GM23248 (cell line): ENCODE measurements at regions of chr14 and their contacts with region 1.

Region 1: GRCh38 chr14:90697577-90698206 is 118.5 kb downstream of the TTC7B start:
- DNase-seq: peak; percentile 88
- H3K4me3 ChIP-seq: no peak overlapping the region
- H3K27ac ChIP-seq: no peak overlapping the region
- H3K4me1 ChIP-seq: 0 out of 2 replicates have a peak, but pooled peaks cover 10% of the 10 kb centered on the region
- H3K27me3 ChIP-seq: no peaks in the 10 kb centered on the region

Region 2: GRCh38 chr14:90288651-90289355 is 408.9 kb before region 1 on chr14:
- in situ Hi-C with region 1: no loop called
- DNase-seq: no peak
- H3K4me3 ChIP-seq: no peak overlapping the region
- H3K27ac ChIP-seq: no peak overlapping the region
- H3K4me1 ChIP-seq: no peaks in the 10 kb centered on the region
- H3K27me3 ChIP-seq: no peaks in the 10 kb centered on the region

Region 3: DNA sequence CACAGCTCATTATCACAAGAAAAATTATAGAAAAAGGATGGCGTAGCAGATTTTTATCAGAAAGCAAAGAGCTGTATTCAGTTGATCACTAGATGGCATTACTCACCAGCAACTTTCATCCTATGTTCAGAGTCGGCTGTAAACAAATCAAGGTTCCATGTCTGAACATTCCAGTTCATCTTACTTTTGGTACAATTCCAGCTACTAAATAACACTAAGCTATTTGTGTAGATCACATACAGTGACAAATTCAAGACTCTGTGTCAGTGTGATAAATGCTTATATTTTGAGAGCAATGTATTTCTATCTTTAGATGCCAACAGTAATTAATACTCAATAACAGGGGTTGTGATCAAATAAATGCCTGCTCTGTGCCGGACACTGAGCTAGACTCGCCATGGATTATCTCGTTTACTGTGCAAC is 396.0 kb before region 1 on chr14:
- in situ Hi-C with region 1: loop called (anchors 10 kb)
- DNase-seq: peak; percentile 66
- H3K4me3 ChIP-seq: no peak overlapping the region
- H3K27ac ChIP-seq: no peak overlapping the region
- H3K4me1 ChIP-seq: no peaks in the 10 kb centered on the region
- H3K27me3 ChIP-seq: no peaks in the 10 kb centered on the region

Region 4: DNA sequence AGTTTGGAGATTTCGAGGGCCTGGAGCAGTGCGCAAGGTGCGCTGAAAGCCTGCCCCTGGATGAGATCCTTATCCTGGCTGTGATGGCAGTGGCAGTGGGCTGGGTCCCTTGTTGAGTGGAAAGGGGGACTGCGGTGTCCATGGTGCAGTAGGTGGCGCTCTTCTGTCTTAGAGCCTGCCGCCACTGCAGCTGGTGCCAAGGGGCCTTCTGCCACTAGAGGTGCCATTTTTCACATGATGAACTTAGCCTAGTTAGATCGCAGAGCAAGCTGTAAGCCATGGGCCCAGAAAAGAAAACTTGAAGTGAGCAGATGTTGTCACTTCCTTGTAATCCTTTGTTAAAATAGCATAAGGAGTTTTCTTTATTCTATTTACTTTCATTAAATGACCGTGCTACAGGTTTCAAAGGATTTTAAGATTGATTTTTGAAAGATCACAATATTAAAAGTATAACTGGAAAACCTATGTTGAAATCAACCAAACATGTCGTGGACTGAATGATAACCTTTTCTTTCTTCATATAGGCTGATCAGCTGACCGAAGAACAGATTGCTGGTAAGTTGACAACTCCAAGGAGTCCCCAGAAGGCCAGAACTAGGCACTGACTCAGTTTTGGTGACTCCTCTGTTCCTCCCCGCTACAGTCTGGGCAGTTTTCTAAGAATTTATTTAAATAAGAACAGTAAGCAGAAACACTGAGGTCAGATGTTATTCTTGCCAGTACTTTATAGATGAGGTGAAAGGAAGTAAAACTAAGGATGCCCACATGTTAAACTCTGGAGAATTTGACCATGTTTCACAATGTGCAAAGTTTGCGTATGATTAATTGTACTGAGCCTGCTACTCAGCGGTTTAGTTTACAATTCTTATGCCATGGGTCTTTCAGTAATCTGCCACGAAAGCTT is 297.9 kb before region 1 on chr14:
- in situ Hi-C with region 1: loop called (anchors 5 kb)
- DNase-seq: peak; percentile 97
- H3K4me3 ChIP-seq: peak overlapping the region; percentile 98
- H3K27ac ChIP-seq: peak overlapping the region; percentile 53
- H3K4me1 ChIP-seq: peaks cover 18% of the 10 kb centered on the region
- H3K27me3 ChIP-seq: no peaks in the 10 kb centered on the region

Region 5: DNA sequence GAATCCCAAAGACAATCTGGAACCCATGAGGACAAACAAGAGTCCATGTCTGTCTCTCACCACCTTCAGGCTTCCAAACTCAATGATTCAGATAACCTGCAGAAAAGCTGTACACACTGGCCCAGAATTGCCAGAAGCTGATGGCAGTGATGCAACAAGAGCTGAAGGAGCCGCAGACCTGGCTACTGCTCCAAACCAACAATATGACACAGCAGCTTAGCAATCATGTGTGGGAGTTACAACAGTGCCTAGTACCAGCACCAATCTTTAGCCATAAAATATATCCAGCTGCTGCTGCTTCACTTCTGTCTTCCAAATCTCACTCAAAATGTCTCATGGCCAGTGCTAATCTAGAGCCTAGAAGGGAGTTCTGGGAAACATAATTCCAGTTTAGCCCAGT is 340.7 kb after region 1 on chr14:
- in situ Hi-C with region 1: no loop called
- DNase-seq: peak; percentile 93
- H3K4me3 ChIP-seq: no peak overlapping the region
- H3K27ac ChIP-seq: peak overlapping the region; percentile 31; the same call in 1 of the 2 replicates
- H3K4me1 ChIP-seq: peaks cover 10% of the 10 kb centered on the region
- H3K27me3 ChIP-seq: no peaks in the 10 kb centered on the region